Thyroid gland (tissue), 4 donors: ENCODE measurements at regions of chr17 and their contacts with region 1.

Region 1: DNA sequence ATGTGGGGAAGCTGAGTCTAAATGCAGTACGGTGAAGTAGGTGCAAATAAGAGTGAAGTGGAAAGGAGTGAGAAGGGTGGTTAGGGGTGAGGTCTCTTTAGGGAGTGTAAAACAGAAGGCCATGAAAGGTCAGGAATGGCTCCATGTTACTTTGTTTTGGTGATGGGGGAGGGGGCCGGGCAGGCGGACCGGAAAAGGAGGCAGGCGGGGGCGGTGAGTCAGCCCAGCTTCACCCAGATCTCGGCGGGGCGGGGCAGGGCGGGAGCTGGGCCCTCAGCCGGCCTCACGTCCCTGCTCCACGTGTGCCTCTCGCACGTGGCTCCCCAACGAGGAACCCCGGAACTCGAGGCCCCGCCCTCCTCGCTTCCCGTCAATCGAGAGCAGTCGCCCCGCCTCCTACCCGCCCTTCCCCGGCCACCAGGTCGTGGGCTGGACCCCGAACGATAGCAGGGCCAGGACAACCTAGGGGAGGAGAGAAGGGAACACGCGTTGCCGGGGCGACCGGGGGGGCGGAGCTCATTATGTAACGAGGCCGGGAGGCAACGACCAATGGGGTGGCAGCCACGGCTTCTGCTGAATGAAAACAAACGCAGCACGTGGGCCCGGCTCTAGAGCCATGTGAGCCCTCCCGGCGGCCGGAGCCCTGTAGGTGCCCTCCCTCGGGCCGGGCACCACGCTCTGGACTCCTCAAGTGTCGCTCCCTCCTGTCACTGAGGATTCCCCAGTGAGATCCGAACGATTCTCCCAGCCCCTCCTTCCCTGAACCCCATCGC is 1.4 kb downstream of the NR1D1 start:
- DNase-seq: peak; percentile 100
- H3K4me3 ChIP-seq: peak overlapping the region; percentile 50 to 76 (median 67)
- H3K27ac ChIP-seq: peak overlapping the region; percentile 99
- H3K4me1 ChIP-seq: peaks cover 38 to 79% of the 10 kb centered on the region in 2 donors
- H3K27me3 ChIP-seq: no peaks in the 10 kb centered on the region
- CTCF ChIP-seq: no peak
- POLR2A ChIP-seq: peak; percentile 68 to 95

Region 2: GRCh38 chr17:40015005-40015997 is 83.7 kb before region 1 on chr17 and contains the start of gene CSF3:
- intact Hi-C with region 1: no loop called
- DNase-seq: no peak
- H3K4me3 ChIP-seq: no peak within 1 kb of the TSS
- H3K27ac ChIP-seq: peak within 1 kb of the TSS in 1 of 3 donors; percentile 36
- H3K4me1 ChIP-seq: peaks cover 6 to 25% of the 10 kb centered on the region in 2 donors
- H3K27me3 ChIP-seq: no peaks in the 10 kb centered on the region
- CTCF ChIP-seq: no peak
- POLR2A ChIP-seq: no peak
- total RNA-seq, gene CSF3: not detected

Region 3: DNA sequence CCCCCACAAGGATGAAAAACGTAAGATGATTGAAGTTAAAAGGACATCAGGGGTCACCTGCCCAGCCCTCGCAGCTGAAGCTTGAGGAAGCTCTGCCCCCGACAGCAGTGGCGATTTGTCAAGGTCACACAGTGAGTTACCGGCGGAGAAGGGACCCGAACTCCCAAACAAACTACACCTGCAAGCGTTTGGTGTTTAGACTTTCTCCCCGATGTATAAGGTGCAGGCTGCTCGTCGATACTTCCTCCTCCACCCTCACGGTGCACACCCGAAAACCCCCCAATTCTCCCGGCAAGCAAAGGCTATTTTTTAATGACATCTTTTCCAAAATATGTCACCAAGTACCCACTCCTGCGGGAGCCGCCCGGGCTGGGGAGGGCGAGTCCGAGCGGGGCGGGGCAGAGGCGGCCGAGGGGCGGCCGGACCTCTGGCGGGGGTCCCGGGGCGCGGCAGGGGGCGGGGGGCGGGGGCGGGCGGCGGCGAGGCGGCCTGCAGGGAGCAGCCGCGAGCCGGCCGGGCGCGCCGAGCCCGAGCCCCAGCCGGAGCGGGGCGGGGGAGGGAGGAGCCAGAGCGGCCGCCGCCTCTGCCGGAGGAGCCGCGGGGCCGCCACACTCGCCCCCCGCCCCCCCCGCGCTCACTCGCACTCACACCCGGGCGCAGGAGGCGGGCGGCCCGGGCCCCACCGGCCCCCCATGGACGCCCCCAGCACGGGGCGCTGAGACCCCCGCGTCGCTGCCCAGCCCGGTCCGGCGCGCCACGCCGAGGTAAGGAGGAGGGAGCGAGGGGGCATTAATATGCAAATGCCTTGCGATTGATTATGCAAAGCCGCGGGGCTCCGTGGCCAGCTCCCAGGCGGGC is 36.5 kb before region 1 on chr17 and contains the start of gene THRA:
- intact Hi-C with region 1: loop called (anchors 5 kb)
- DNase-seq: peak; percentile 76 to 80
- H3K4me3 ChIP-seq: peak within 1 kb of the TSS; percentile 94 to 99 (median 97)
- H3K27ac ChIP-seq: peak within 1 kb of the TSS; percentile 95 to 98 (median 98)
- H3K4me1 ChIP-seq: peaks cover 27 to 38% of the 10 kb centered on the region in 2 donors
- H3K27me3 ChIP-seq: no peaks in the 10 kb centered on the region
- CTCF ChIP-seq: peak in 2 of 6 experiments; percentile 3 to 33
- POLR2A ChIP-seq: peak in 1 of 2 donors; percentile 58
- total RNA-seq, gene THRA: 34.0 to 52.9 (median 44.8) TPM

Region 4: DNA sequence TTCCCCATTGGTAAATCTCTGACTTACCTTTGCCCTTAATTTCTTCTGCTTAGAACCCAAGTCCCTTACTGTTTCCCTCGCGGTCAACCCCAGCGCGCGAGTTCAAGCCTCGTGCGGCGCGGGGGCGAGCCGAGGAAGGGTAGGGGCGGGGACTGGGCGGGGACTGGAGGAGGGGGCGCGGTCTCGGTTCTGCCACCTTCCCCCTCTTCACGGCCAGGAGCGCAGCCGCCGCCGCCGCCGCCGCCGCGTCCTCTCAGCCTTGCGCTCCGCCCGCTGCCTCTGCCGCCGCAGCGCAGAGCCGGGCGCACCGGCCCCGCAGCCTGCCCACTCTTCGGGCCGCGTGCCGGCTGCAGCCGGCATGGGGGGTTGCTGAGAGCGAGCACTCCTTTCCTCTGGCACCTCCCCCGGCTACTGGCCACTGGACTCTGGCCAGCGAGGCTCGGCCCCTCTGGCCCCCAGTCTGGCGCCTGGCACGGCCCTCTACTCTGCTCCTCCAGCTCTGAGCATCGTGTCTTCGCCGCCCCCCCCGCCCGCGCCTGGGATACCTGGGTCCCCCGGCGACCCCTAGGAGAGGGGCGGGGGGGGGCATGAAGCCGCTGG is 78.3 kb after region 1 on chr17 and contains the start of gene RAPGEFL1:
- intact Hi-C with region 1: no loop called
- DNase-seq: peak; percentile 80 to 83
- H3K4me3 ChIP-seq: peak within 1 kb of the TSS; percentile 14 to 40 (median 27)
- H3K27ac ChIP-seq: no peak within 1 kb of the TSS
- H3K4me1 ChIP-seq: peaks cover 4 to 19% of the 10 kb centered on the region in 2 donors
- H3K27me3 ChIP-seq: no peaks in the 10 kb centered on the region
- CTCF ChIP-seq: no peak
- POLR2A ChIP-seq: peak in 1 of 2 donors; percentile 43
- total RNA-seq, gene RAPGEFL1: 1.3 to 5.2 (median 4.1) TPM